Dorsolateral prefrontal cortex (tissue), 120 donors: ENCODE measurements at regions of chr1 and their contacts with region 1.

Region 1: DNA sequence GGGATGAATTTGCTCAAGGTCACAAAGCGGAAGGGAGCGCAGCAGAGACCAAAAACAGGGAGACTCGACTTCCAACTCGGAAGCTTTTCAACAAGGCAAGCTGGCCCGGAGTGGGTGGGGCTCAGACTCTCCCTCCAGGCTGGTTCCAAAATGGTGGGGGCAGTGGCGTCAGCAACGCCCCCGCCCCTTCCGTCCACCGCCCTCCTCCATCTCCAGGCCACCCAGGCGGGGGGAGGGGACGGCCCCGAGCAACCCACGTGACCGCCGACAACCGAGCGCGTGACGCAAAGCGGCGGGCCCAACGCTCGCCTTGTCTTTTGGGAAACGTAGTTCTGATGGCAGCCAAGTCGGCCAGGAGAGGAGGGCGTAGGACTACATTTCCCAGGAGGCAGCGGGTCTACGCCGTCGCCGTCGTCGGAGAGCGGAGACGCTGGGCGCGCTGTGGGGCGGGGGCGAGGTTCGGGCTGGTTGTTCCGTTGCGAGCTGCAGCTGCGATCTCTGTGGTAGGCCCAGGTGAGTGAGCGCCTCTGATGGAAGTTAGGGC is at the start of gene THRAP3:
- DNase-seq: peak; percentile 99 to 100 (median 100)
- H3K4me3 ChIP-seq: peak within 1 kb of the TSS; percentile 58 to 99 (median 90)
- H3K27ac ChIP-seq: peak within 1 kb of the TSS; percentile 76 to 99 (median 96)
- H3K27me3 ChIP-seq: no peaks in the 10 kb centered on the region
- CTCF ChIP-seq: peak in 16 of 56 donors; percentile 0 to 53 (median 23)
- total RNA-seq, gene THRAP3: 55.1 to 96.7 (median 78.0) TPM

Region 2: GRCh38 chr1:36187800-36188593 is 36.1 kb before region 1 on chr1:
- intact Hi-C with region 1: loop called in 1 of 2 experiments (anchors 5 kb)
- DNase-seq: peak; percentile 71 to 93 (median 90)
- H3K4me3 ChIP-seq: peak overlapping the region in 9 of 59 donors; percentile 2 to 24 (median 9)
- H3K27ac ChIP-seq: peak overlapping the region; percentile 72 to 96 (median 91)
- H3K27me3 ChIP-seq: no peaks in the 10 kb centered on the region
- CTCF ChIP-seq: peak; percentile 69 to 96 (median 91)

Region 3: DNA sequence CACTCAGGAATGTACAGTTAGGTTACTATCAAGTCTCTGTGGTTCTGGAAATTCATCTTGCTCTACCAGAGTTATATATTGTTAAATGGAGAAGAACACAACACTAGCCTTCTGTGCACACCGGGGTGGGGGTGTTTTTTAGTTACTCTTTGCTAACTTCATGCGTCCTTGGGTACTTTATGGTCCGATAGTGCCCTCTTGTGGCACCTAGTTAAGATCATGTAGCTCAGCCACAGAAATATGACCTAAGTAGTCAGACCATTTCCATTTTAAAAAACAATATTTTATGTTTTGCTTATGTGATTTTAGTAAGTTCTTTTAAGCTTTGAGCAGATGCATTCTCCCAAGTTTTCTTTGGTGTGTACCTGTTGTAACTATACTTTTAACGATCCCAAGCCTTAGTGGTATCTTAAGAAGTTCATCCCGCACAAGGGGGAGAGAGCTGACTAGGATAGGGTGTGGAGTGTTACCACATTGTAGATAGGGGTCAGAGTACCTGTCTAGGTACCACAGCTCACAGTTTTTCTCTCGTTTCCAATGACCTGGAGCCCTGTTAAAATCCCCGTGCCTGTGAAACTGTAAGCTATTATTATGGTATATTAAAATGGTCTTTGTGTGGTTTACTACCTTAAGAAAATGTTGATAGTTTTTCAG is 61.5 kb after region 1 on chr1:
- intact Hi-C with region 1: loop called (anchors 5 kb)
- DNase-seq: peak in 5 of 10 donors; percentile 41 to 84 (median 64)
- H3K4me3 ChIP-seq: no peak overlapping the region
- H3K27ac ChIP-seq: peak overlapping the region in 30 of 59 donors; percentile 0 to 56 (median 22)
- H3K27me3 ChIP-seq: no peaks in the 10 kb centered on the region
- CTCF ChIP-seq: peak; percentile 61 to 89 (median 79)

Region 4: GRCh38 chr1:36385410-36386257 is 161.6 kb after region 1 on chr1 and contains the start of gene STK40:
- intact Hi-C with region 1: loop called (anchors 10 kb)
- DNase-seq: peak; percentile 95 to 99 (median 98)
- H3K4me3 ChIP-seq: peak within 1 kb of the TSS; percentile 80 to 100 (median 95)
- H3K27ac ChIP-seq: peak within 1 kb of the TSS; percentile 70 to 99 (median 96)
- H3K27me3 ChIP-seq: no peaks in the 10 kb centered on the region
- CTCF ChIP-seq: peak in 16 of 56 donors; percentile 6 to 47 (median 14)
- total RNA-seq, gene STK40: 17.4 to 52.5 (median 29.0) TPM